ENCODE measurements at regions of chr11 and their contacts with region 1.

Region 1: GRCh38 chr11:64778508-64779346 is at the start of gene SF1:
- DNase-seq: peak; percentile 100
- ATAC-seq: peak; percentile 88
- H3K4me3 ChIP-seq: peak within 1 kb of the TSS; percentile 94
- H3K27ac ChIP-seq: peak within 1 kb of the TSS; percentile 94
- H3K4me1 ChIP-seq: peaks cover 2% of the 10 kb centered on the region; the same call in 1 of the 2 replicates
- H3K27me3 ChIP-seq: no peaks in the 10 kb centered on the region
- CTCF ChIP-seq: peak; percentile 20; the same call in 1 of the 2 replicates
- POLR2A ChIP-seq: peak; percentile 84
- RAD21 ChIP-seq: no peak
- total RNA-seq, gene SF1: 56.8 and 76.1 TPM in 2 replicates

Region 2: GRCh38 chr11:64767344-64768299 is 11.1 kb before region 1 on chr11:
- CTCF ChIA-PET with region 1: interaction called, 3 read pairs
- POLR2A ChIA-PET with region 1: no interaction called
- dilution Hi-C with region 1: no loop called
- in situ Hi-C with region 1: no loop called
- intact Hi-C with region 1: loop called (anchors 1 kb)
- DNase-seq: peak; percentile 60
- ATAC-seq: peak; percentile 53
- H3K4me3 ChIP-seq: no peak overlapping the region
- H3K27ac ChIP-seq: no peak overlapping the region
- H3K4me1 ChIP-seq: peaks cover 13% of the 10 kb centered on the region
- H3K27me3 ChIP-seq: no peaks in the 10 kb centered on the region
- CTCF ChIP-seq: peak; percentile 63
- POLR2A ChIP-seq: no peak
- RAD21 ChIP-seq: peak; percentile 29; the same call in 1 of the 2 replicates

Region 3: GRCh38 chr11:64803163-64803845 is 24.6 kb after region 1 on chr11 and contains the start of gene MAP4K2:
- CTCF ChIA-PET with region 1: interaction called, 3 read pairs
- POLR2A ChIA-PET with region 1: no interaction called
- dilution Hi-C with region 1: no loop called
- in situ Hi-C with region 1: no loop called
- intact Hi-C with region 1: loop called (anchors 2 kb)
- DNase-seq: peak; percentile 68
- ATAC-seq: peak; percentile 97
- H3K4me3 ChIP-seq: peak within 1 kb of the TSS; percentile 84
- H3K27ac ChIP-seq: peak within 1 kb of the TSS; percentile 27
- H3K4me1 ChIP-seq: peaks cover 10% of the 10 kb centered on the region
- H3K27me3 ChIP-seq: no peaks in the 10 kb centered on the region
- CTCF ChIP-seq: peak; percentile 38; the same call in 1 of the 2 replicates
- POLR2A ChIP-seq: peak; percentile 69
- RAD21 ChIP-seq: 0 out of 2 replicates have a peak, but pooled peaks have one; percentile 20
- total RNA-seq, gene MAP4K2: 9.2 and 11.7 TPM in 2 replicates

Region 4: DNA sequence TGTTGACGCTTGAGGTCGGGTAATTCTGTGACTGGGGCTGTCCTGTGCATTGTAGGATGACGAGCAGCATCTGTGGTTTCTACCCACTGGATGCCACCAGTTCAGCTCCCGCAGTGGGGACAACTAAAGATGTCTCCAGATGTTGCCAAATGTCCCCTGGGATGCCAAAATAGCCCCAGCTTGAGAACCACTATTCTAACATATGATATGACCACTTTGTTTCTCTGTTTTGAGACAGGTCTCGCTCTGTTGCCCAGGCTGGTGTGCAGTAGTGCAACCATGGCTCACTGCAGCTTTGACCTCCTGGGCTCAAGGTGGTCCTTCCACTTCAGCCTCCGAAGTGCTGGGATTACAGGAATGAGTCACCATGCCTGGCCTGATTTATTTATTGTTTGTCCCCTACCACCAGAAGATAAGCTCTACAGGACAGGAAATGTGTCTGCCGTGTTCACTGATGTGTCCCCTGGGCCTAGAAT is 36.0 kb after region 1 on chr11:
- CTCF ChIA-PET with region 1: no interaction called
- POLR2A ChIA-PET with region 1: no interaction called
- dilution Hi-C with region 1: no loop called
- in situ Hi-C with region 1: no loop called
- intact Hi-C with region 1: no loop called
- DNase-seq: no peak
- ATAC-seq: no peak
- H3K4me3 ChIP-seq: no peak overlapping the region
- H3K27ac ChIP-seq: no peak overlapping the region
- H3K4me1 ChIP-seq: no peaks in the 10 kb centered on the region
- H3K27me3 ChIP-seq: no peaks in the 10 kb centered on the region; the same call in 1 of the 2 replicates
- CTCF ChIP-seq: no peak
- POLR2A ChIP-seq: no peak
- RAD21 ChIP-seq: no peak

Measured in IMR-90 (cell line).